Ovary (tissue), 10 donors: ENCODE measurements at regions of chr6 and their contacts with region 1.

Region 1: DNA sequence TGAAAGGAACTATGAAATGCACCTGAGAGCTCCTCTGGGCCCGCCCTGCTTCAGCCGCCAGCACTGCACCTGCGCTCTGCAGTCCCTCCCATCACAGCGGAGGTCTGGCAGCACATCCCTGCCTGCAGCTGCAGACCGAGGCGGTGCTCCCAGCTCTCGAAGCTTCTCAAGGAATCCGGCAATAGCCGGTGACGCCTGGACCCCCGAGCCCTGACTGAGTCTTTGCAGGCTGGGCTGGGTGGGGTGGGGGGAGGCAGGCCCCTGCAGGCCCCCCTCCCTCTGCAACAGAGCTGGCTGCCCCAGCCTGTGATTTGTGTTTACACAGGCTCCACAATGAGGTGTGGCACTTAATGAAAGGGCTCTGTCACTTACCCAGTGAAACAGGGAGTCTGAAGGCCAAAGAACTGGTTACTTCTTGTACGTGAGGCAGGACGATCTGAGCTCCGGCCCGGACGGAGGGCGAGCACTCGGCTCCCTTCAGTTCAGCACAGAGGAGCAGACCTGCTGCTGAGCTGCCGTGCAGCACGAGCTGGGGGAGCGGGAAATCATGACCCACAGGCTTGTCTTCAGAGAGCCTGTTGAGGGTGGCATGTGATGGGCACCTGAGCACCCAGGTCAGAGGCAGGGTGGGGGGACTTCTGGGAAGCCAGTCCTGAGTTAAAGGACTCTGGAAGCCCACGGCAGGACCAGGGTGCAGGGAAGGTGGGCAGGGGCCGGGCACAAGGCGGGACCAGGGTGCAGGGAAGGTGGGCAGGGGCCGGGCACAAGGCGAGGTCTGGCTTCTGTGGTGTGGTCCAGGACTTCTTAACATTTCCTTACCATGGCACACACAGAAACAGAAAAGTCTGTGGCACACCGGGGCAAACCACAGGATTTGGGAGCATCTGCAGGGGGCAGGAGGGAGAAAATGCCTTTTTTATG is 192.3 kb upstream of the THBS2 start:
- DNase-seq: no peak
- H3K4me3 ChIP-seq: no peak overlapping the region
- H3K27ac ChIP-seq: no peak overlapping the region
- H3K4me1 ChIP-seq: peaks cover 21% of the 10 kb centered on the region
- H3K27me3 ChIP-seq: no peaks in the 10 kb centered on the region
- CTCF ChIP-seq: no peak
- EP300 ChIP-seq: no peak
- POLR2A ChIP-seq: no peak

Region 2: GRCh38 chr6:169205176-169206160 is 240.5 kb before region 1 on chr6:
- intact Hi-C with region 1: loop called in 1 of 4 experiments (anchors 10 kb)
- DNase-seq: peak in 4 of 5 donors; percentile 60 to 72 (median 62)
- H3K4me3 ChIP-seq: no peak overlapping the region
- H3K27ac ChIP-seq: no peak overlapping the region
- H3K4me1 ChIP-seq: peaks cover 8% of the 10 kb centered on the region
- H3K27me3 ChIP-seq: no peaks in the 10 kb centered on the region
- CTCF ChIP-seq: no peak
- EP300 ChIP-seq: no peak
- POLR2A ChIP-seq: no peak

Region 3: GRCh38 chr6:170152989-170153388 is 707.1 kb after region 1 on chr6:
- intact Hi-C with region 1: no loop called
- DNase-seq: peak in 2 of 5 donors; percentile 30 to 58
- H3K4me3 ChIP-seq: no peak overlapping the region
- H3K27ac ChIP-seq: no peak overlapping the region
- H3K4me1 ChIP-seq: no peaks in the 10 kb centered on the region
- H3K27me3 ChIP-seq: no peaks in the 10 kb centered on the region
- CTCF ChIP-seq: no peak
- EP300 ChIP-seq: no peak
- POLR2A ChIP-seq: no peak